Natural killer cell (primary cell): ENCODE measurements at regions of chr1 and their contacts with region 1.

Region 1: GRCh38 chr1:107963601-107964335 is 1.2 kb downstream of the VAV3 start:
- DNase-seq: peak; percentile 47 to 75
- ATAC-seq: peak; percentile 69 to 82 (median 70)
- H3K4me3 ChIP-seq: peak overlapping the region; percentile 84
- H3K4me3 Mint-ChIP-seq: peak overlapping the region; percentile 98
- H3K27ac ChIP-seq: peak overlapping the region; percentile 83
- H3K27ac Mint-ChIP-seq: peak overlapping the region; percentile 95 to 97
- H3K4me1 ChIP-seq: peaks cover 18% of the 10 kb centered on the region
- H3K4me1 Mint-ChIP-seq: peaks cover 47 to 55% of the 10 kb centered on the region in 2 donors
- H3K27me3 ChIP-seq: no peaks in the 10 kb centered on the region
- H3K27me3 Mint-ChIP-seq: no peaks in the 10 kb centered on the region
- CTCF ChIP-seq: no peak

Region 2: GRCh38 chr1:107430540-107431228 is 533.1 kb before region 1 on chr1:
- intact Hi-C with region 1: no loop called
- DNase-seq: peak in 1 of 2 donors; percentile 20
- ATAC-seq: peak in 1 of 3 donors; percentile 48
- H3K4me3 ChIP-seq: no peak overlapping the region
- H3K4me3 Mint-ChIP-seq: no peak overlapping the region
- H3K27ac ChIP-seq: no peak overlapping the region
- H3K27ac Mint-ChIP-seq: no peak overlapping the region
- H3K4me1 ChIP-seq: no peaks in the 10 kb centered on the region
- H3K4me1 Mint-ChIP-seq: peaks cover 0 to 5% of the 10 kb centered on the region in 2 donors
- H3K27me3 ChIP-seq: no peaks in the 10 kb centered on the region
- H3K27me3 Mint-ChIP-seq: peaks cover 7 to 22% of the 10 kb centered on the region in 2 donors
- CTCF ChIP-seq: peak; percentile 62

Region 3: GRCh38 chr1:107840725-107841124 is 123.0 kb before region 1 on chr1:
- intact Hi-C with region 1: loop called (anchors 5 kb)
- DNase-seq: peak in 1 of 2 donors; percentile 46
- ATAC-seq: peak; percentile 53 to 70 (median 53)
- H3K4me3 ChIP-seq: peak overlapping the region; percentile 13
- H3K4me3 Mint-ChIP-seq: peak overlapping the region; percentile 75
- H3K27ac ChIP-seq: peak overlapping the region; percentile 82
- H3K27ac Mint-ChIP-seq: peak overlapping the region; percentile 87 to 89
- H3K4me1 ChIP-seq: peaks cover 31% of the 10 kb centered on the region
- H3K4me1 Mint-ChIP-seq: peaks cover 93 to 96% of the 10 kb centered on the region in 2 donors
- H3K27me3 ChIP-seq: no peaks in the 10 kb centered on the region
- H3K27me3 Mint-ChIP-seq: no peaks in the 10 kb centered on the region
- CTCF ChIP-seq: no peak

Region 4: DNA sequence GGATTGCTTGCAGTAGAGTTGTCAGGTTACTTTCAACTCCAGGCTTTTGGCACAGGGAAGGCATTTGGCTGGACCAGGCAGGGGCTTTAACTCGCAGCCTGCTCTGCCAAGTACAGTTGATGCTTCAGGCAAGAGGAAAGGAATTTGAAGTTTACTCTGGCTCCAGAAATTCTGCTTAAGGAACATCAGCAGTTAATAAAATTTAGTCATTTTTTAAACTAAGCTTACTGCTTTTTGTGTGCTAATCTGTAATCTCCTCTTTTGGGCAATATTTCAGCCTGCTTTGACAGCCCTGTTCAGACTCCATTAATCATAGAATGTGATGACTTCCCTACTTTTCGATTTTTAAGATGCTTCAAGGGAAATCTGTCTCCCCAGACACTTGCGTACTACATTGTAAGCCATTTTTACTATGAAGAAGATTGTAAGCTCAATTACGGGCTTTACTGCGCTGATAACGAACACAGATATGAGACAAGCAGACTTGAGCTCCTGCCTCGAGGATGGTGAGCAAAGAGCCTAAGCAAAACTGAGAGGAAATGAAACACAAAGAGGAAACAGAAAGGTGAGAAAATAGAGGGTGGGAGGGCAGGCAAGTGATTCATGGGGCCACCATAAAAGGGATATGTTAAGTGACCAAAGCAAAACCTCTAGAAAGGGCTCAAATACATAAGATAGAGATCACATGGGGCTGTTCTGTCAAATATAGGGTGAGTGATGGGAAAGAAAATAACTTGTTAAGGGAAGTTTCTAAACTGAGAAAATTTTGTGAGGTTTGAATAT is 77.8 kb after region 1 on chr1:
- intact Hi-C with region 1: loop called (anchors 2 kb)
- DNase-seq: peak in 1 of 2 donors; percentile 38
- ATAC-seq: peak; percentile 76 to 91 (median 86)
- H3K4me3 ChIP-seq: no peak overlapping the region
- H3K4me3 Mint-ChIP-seq: peak overlapping the region; percentile 74
- H3K27ac ChIP-seq: peak overlapping the region; percentile 79
- H3K27ac Mint-ChIP-seq: peak overlapping the region; percentile 76 to 86
- H3K4me1 ChIP-seq: peaks cover 23% of the 10 kb centered on the region
- H3K4me1 Mint-ChIP-seq: peaks cover 49 to 56% of the 10 kb centered on the region in 2 donors
- H3K27me3 ChIP-seq: no peaks in the 10 kb centered on the region
- H3K27me3 Mint-ChIP-seq: no peaks in the 10 kb centered on the region
- CTCF ChIP-seq: no peak